MCF 10A (cell line): ENCODE measurements at regions of chr4 and their contacts with region 1.

Region 1: DNA sequence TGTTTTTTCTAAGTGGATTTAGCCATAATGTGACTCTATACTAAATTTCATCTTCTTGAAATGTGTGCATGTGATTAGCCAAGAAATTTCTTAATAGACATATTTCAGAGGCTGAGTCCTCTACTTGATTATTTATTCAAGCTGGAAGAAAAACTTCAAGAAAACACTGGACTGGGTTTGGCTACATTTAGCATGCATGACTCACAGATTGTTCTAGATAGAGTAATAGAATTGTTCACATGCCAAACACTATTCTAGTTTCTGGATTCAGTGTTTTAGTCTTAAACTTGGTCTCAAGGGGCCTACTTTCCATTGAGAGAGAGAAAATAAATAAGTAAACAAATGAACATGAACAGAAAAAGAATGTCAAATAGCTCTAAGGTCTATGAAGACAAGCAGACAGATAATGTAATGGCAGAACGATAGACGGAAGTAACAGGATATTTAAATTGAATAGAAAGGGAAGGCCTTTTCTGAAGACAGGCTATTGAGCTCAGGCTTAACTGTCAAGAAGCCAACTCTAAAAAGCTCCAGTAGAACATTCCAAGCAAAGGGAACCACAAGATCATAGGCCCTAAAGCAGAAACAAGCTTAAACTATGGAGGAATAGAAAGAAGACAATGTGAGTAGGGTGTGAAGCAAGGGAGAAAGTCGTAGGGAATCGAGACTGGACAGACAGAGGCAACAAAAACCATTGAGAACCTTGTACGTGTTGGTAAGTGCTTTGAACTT is 104.6 kb downstream of the TMEM144 start:
- DNase-seq: peak; percentile 90
- H3K4me3 Mint-ChIP-seq: peak overlapping the region; percentile 74
- H3K27ac Mint-ChIP-seq: peak overlapping the region; percentile 100
- H3K4me1 Mint-ChIP-seq: peaks cover 49% of the 10 kb centered on the region
- H3K27me3 Mint-ChIP-seq: no peaks in the 10 kb centered on the region
- CTCF ChIP-seq: no peak

Region 2: DNA sequence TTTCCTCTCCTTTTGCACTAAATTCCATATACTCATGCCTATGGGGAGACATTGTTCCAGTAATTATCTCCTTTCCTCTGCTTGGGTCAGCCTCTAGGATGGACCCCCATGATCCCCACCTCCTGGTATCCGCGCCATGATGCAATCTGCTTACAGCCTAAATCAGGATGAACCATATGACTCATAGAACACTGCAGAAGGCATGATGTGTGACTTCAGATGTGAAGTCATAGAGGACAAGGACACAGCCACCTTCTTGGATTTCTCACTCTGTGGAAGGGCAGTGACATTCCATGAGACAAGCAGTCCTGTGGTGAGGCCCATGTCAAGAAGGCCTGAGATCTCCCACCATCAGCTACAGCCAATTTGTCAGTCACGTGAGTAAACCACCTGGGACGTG is 113.6 kb before region 1 on chr4:
- CTCF ChIA-PET with region 1: no interaction called
- POLR2A ChIA-PET with region 1: no interaction called
- intact Hi-C with region 1: no loop called
- DNase-seq: no peak
- H3K4me3 Mint-ChIP-seq: no peak overlapping the region
- H3K27ac Mint-ChIP-seq: no peak overlapping the region
- H3K4me1 Mint-ChIP-seq: no peaks in the 10 kb centered on the region
- H3K27me3 Mint-ChIP-seq: no peaks in the 10 kb centered on the region
- CTCF ChIP-seq: no peak

Region 3: DNA sequence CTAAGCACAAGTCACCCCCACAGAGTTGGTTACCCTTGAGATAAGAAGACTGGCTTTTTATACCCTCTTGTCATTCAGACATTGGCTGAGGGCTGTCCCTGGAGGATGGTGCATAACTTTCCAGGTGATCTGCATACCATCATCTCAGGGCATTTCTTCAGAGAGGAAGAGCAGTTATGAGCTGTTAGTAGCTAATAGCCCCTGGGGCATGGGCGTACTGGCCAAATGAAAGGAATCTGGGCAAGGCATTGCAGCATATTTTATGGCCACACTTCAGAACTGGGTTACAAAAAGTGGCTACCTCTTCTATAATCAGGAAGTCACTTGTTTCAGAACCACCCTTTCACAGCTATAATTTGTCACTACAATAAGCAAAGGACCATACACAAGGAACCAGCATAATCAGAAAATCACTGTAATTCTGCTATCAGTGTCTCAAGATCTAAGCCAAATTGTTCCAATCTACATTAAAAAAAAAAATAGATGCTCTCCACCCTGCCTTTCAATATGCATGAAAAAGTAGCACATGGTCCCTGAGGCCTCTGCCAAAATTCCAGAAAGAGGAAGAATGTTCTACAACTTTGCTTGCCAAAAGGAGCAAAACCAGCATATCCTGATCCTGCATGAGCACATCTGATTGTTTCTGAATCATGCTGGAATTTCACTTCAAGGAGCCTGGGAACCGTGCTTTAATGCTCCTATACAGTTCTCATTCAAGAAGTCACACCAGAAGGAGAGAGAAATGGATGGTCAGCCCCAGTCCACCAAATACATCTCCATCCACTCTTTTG is 12.7 kb before region 1 on chr4:
- CTCF ChIA-PET with region 1: interaction called, 9 read pairs
- POLR2A ChIA-PET with region 1: interaction called, 26 read pairs
- intact Hi-C with region 1: no loop called
- DNase-seq: peak; percentile 69
- H3K4me3 Mint-ChIP-seq: no peak overlapping the region
- H3K27ac Mint-ChIP-seq: peak overlapping the region; percentile 84
- H3K4me1 Mint-ChIP-seq: peaks cover 42% of the 10 kb centered on the region
- H3K27me3 Mint-ChIP-seq: no peaks in the 10 kb centered on the region
- CTCF ChIP-seq: no peak

Region 4: DNA sequence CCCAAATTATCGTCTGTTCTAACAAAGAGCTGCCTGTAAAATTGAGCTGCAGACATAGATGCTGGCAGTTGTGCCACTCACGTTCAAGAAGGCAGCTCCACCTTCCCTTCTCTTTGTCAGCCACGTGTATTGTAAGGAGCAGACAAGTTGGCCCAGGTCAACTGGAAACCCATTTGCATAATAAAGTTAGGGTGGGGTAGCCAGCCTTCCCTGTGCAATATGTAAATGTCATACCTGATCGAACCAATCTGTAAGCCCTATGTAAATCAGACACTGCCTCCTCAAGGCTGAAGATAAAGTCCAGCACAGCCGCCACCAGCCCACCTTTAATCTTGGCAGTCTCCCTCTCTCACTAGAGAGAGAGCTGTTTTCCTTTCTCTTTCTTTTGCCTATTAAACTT is 12.6 kb after region 1 on chr4:
- CTCF ChIA-PET with region 1: interaction called, 10 read pairs
- POLR2A ChIA-PET with region 1: interaction called, 19 read pairs
- intact Hi-C with region 1: no loop called
- DNase-seq: peak; percentile 75
- H3K4me3 Mint-ChIP-seq: peak overlapping the region; percentile 19
- H3K27ac Mint-ChIP-seq: no peak overlapping the region
- H3K4me1 Mint-ChIP-seq: peaks cover 12% of the 10 kb centered on the region
- H3K27me3 Mint-ChIP-seq: no peaks in the 10 kb centered on the region
- CTCF ChIP-seq: no peak

Region 5: GRCh38 chr4:158371158-158371557 is 56.2 kb after region 1 on chr4:
- CTCF ChIA-PET with region 1: interaction called, 3 read pairs
- POLR2A ChIA-PET with region 1: interaction called, 10 read pairs
- intact Hi-C with region 1: loop called (anchors 1 kb)
- DNase-seq: peak; percentile 70
- H3K4me3 Mint-ChIP-seq: peak overlapping the region; percentile 56
- H3K27ac Mint-ChIP-seq: peak overlapping the region; percentile 95
- H3K4me1 Mint-ChIP-seq: peaks cover 39% of the 10 kb centered on the region
- H3K27me3 Mint-ChIP-seq: no peaks in the 10 kb centered on the region
- CTCF ChIP-seq: no peak

Region 6: DNA sequence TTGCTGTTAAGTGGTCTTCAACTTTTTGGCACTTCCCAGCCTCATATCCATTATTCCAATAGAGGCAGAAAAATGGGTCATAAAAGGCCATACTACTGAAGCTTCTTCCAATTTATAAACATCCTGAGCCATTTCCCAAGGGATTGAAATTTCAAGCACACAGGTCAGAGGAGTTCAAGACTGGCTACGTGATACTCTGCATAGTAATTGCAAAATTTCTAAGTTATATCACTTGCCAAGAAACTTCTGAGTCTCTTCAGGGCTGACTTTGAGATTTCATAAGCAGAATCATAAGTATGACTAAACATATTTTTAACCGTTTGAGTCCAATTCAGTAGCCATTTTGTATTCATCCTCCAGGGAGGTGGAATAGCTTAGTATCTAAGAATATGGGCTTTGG is 131.2 kb after region 1 on chr4:
- CTCF ChIA-PET with region 1: no interaction called
- POLR2A ChIA-PET with region 1: interaction called, 12 read pairs
- intact Hi-C with region 1: no loop called
- DNase-seq: peak; percentile 90
- H3K4me3 Mint-ChIP-seq: peak overlapping the region; percentile 45
- H3K27ac Mint-ChIP-seq: peak overlapping the region; percentile 93
- H3K4me1 Mint-ChIP-seq: peaks cover 28% of the 10 kb centered on the region
- H3K27me3 Mint-ChIP-seq: no peaks in the 10 kb centered on the region
- CTCF ChIP-seq: no peak